ENCODE measurements at regions of chr10 and their contacts with region 1.

Region 1: DNA sequence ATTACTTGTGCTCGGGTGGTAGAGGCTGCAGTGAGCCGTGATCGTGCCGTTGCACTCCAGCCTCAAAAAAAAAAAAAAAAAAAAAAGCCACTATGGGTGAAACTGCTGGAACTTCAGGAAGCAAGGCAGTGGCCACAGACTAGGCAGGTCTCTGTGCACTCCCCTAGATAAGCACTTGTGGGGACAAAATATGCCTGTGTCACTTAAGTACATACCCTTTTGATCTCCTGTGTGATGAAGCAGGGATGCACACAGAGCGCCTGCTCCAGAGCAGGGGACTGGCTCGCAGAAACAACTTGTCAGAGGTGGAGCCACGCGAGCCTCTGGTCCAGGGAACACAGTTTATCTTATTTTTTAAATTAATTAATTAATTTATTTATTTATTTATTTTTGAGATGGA is 42.9 kb upstream of the PSAP start:
- DNase-seq: no peak
- ATAC-seq: no peak
- H3K4me3 ChIP-seq: no peak overlapping the region
- H3K27ac ChIP-seq: no peak overlapping the region
- H3K4me1 ChIP-seq: peaks cover 17% of the 10 kb centered on the region
- CTCF ChIP-seq: no peak
- EP300 ChIP-seq: no peak
- POLR2A ChIP-seq: no peak
- RAD21 ChIP-seq: no peak

Region 2: GRCh38 chr10:71812016-71812912 is 81.7 kb before region 1 on chr10:
- CTCF ChIA-PET with region 1: interaction called, 101 read pairs
- POLR2A ChIA-PET with region 1: no interaction called
- DNase-seq: peak; percentile 61 to 82
- ATAC-seq: peak; percentile 61 to 89
- H3K4me3 ChIP-seq: no peak overlapping the region
- H3K27ac ChIP-seq: peak overlapping the region in 1 of 2 experiments; percentile 43; a peak in 3 of 6 replicates
- H3K4me1 ChIP-seq: peaks cover 18% of the 10 kb centered on the region; the same call in 2 of the 3 replicates
- CTCF ChIP-seq: peak; percentile 87
- EP300 ChIP-seq: no peak
- POLR2A ChIP-seq: no peak
- RAD21 ChIP-seq: peak; percentile 89 to 91

Region 3: DNA sequence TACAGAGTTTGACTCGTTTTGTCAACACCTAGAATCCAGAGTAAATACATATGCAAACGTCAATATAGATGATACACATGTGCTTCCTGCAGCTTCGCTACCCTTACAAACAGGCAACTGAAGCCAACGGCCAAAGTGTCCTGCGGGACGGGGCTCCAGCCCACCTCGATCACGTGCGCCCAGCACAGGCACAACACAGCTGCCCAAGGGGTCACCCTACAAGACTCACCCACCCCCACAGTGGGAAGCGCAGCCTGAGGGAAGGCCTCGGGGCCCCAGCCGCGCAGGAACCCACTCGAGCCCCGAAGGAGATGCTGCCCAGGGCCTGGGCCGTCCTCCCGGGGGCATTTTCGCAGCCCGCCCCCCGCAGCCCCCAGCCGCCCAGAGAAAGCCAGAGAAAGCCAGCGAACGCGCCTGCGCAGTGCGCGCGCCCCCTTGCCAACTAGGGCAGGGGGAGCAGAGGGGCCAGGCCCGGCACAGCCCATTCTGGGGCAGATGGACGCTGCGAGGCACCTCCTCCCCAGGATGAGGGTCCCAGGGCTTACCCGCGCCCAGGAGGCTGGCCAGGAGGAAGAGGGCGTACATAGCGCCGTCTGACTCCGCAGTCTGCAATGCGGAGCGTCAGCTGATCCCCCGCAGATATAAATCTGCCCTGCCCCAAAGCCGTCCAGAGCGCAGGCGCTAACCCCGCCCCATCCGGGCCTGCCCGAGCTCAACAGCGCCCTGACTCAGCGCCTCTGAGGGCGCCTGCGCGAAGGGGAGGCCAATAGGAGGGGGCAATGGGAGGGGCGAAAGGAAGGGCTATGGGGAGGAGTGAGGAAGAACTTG is 43.1 kb before region 1 on chr10 and contains the start of gene PSAP:
- CTCF ChIA-PET with region 1: interaction called, 217 read pairs
- POLR2A ChIA-PET with region 1: interaction called, 15 read pairs
- DNase-seq: peak; percentile 97
- ATAC-seq: peak; percentile 95 to 98
- H3K4me3 ChIP-seq: peak within 1 kb of the TSS; percentile 76
- H3K27ac ChIP-seq: peak within 1 kb of the TSS; percentile 92 to 97
- H3K4me1 ChIP-seq: peaks cover 34% of the 10 kb centered on the region
- CTCF ChIP-seq: no peak
- EP300 ChIP-seq: no peak
- POLR2A ChIP-seq: peak; percentile 96
- RAD21 ChIP-seq: no peak; a peak in 1 of 5 replicates
- polyA plus RNA-seq, gene PSAP: 1,519 and 1,660 TPM in 2 replicates

Region 4: GRCh38 chr10:71912431-71912830 is 18.5 kb after region 1 on chr10:
- CTCF ChIA-PET with region 1: interaction called, 41 read pairs
- POLR2A ChIA-PET with region 1: no interaction called
- DNase-seq: peak in 1 of 2 experiments; percentile 35
- ATAC-seq: peak; percentile 83 to 85
- H3K4me3 ChIP-seq: no peak overlapping the region
- H3K27ac ChIP-seq: no peak overlapping the region
- H3K4me1 ChIP-seq: 0 out of 3 replicates have a peak, but pooled peaks cover 3% of the 10 kb centered on the region
- CTCF ChIP-seq: no peak
- EP300 ChIP-seq: no peak
- POLR2A ChIP-seq: no peak
- RAD21 ChIP-seq: no peak

Region 5: DNA sequence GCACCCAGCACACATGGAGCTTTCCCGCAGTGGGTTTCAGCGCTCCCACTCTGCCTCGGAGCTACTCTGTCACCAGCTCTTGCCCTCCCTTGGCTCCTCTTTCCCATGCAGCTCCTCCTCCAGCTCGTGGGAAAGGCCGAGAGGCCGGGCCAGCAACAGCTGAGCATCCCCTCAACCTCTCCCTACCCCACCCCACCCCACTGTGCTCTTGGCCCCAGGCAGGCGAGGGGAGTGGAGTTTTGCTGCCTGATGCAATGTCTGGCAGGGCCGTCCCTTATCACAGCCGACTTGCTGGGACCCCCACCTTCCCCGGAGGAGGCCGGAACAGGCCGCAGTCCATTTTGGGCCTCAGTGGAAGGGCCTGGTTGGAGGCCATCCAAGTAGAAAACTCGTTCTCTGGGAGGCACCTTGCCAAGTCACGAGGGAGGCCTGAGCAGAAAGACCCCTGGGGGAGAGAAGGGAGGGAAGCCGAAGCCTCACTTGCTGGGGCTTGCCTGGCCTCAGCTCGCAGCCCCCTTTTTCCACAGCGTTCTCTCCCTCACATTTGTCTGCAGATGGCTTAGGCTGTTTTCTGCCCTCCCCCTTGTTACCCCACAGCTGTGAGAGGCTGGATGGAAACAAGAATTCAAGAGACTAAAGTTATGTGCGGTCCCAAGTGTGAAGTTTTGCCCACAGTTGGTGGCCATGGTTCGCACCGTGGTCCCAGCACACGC is 105.6 kb after region 1 on chr10:
- CTCF ChIA-PET with region 1: interaction called, 12 read pairs
- POLR2A ChIA-PET with region 1: no interaction called
- DNase-seq: no peak
- ATAC-seq: peak; percentile 5 to 27; a peak in 3 of 6 replicates
- H3K4me3 ChIP-seq: no peak overlapping the region
- H3K27ac ChIP-seq: peak overlapping the region; percentile 32 to 82; a peak in 5 of 6 replicates
- H3K4me1 ChIP-seq: peaks cover 37% of the 10 kb centered on the region
- CTCF ChIP-seq: no peak
- EP300 ChIP-seq: no peak
- POLR2A ChIP-seq: no peak
- RAD21 ChIP-seq: no peak

Region 6: DNA sequence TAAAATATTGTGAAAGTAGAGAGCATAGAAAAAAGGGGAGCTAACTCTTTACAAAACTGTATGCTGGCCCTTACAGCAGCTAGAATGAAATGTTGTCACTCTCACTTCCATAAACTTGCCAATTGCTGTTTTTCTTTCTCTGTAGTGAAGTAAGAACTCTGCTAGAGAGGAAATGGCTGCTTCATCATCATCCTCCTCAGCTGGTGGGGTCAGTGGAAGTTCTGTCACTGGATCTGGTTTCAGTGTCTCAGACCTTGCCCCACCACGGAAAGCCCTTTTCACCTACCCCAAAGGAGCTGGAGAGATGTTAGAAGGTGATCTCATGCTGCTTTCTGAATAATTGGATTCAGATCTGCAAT is 329.8 kb after region 1 on chr10:
- CTCF ChIA-PET with region 1: interaction called, 26 read pairs
- POLR2A ChIA-PET with region 1: no interaction called
- DNase-seq: no peak
- ATAC-seq: no peak
- H3K4me3 ChIP-seq: no peak overlapping the region
- H3K27ac ChIP-seq: peak overlapping the region; percentile 66 to 82
- H3K4me1 ChIP-seq: peaks cover 38% of the 10 kb centered on the region
- CTCF ChIP-seq: no peak
- EP300 ChIP-seq: no peak
- POLR2A ChIP-seq: no peak
- RAD21 ChIP-seq: no peak